IMR-90 (cell line): ENCODE measurements at regions of chr14 and their contacts with region 1.

Region 1: DNA sequence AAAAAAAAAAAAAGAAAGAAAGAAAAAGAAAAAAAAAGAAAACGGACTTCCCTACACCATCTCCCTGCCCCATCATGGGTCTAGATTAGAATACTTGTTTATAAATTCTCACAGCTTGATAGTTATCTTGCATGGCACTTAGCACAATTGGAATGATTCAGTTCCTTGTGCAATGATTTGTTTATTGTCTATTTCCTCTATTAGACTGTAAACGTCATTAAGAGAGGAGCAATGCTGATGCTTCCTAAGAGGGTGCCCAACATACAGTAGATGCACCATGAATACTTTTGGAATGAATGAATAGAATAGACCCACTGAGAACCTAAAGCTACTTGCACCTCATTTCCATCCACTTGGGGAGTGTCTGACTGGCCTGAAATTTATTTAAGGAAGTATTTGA is 40.8 kb downstream of the PAX9 start:
- DNase-seq: no peak
- ATAC-seq: no peak
- H3K4me3 ChIP-seq: no peak overlapping the region
- H3K27ac ChIP-seq: no peak overlapping the region
- H3K4me1 ChIP-seq: no peaks in the 10 kb centered on the region
- H3K27me3 ChIP-seq: no peaks in the 10 kb centered on the region
- CTCF ChIP-seq: no peak
- POLR2A ChIP-seq: no peak
- RAD21 ChIP-seq: no peak

Region 2: DNA sequence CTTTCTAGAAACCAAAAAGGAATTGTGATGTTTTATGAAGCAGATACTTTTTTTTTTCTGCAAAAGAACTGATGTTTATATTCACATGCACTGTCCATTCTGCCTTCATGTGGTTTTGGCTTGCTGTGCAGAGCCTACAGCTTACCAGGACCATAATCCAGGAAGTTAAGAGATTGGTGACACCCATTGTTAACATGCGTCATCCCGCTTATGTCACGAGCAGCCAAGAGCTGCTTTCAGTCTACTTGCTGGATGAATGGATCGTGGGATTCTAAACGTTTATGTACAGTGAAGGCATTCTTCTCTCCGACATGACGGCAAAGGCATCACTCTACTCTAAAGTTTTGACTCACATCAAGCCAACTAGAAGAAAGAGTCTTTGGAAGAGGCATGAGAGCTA is 35.8 kb after region 1 on chr14:
- CTCF ChIA-PET with region 1: interaction called, 10 read pairs
- POLR2A ChIA-PET with region 1: no interaction called
- dilution Hi-C with region 1: no loop called
- in situ Hi-C with region 1: no loop called
- intact Hi-C with region 1: no loop called
- DNase-seq: no peak
- ATAC-seq: no peak
- H3K4me3 ChIP-seq: no peak overlapping the region
- H3K27ac ChIP-seq: no peak overlapping the region
- H3K4me1 ChIP-seq: no peaks in the 10 kb centered on the region
- H3K27me3 ChIP-seq: no peaks in the 10 kb centered on the region
- CTCF ChIP-seq: no peak
- POLR2A ChIP-seq: no peak
- RAD21 ChIP-seq: no peak

Region 3: GRCh38 chr14:36975835-36976234 is 273.4 kb after region 1 on chr14:
- CTCF ChIA-PET with region 1: no interaction called
- POLR2A ChIA-PET with region 1: no interaction called
- dilution Hi-C with region 1: no loop called
- in situ Hi-C with region 1: no loop called
- intact Hi-C with region 1: no loop called
- DNase-seq: peak; percentile 25
- ATAC-seq: no peak
- H3K4me3 ChIP-seq: no peak overlapping the region
- H3K27ac ChIP-seq: no peak overlapping the region
- H3K4me1 ChIP-seq: peaks cover 12% of the 10 kb centered on the region
- H3K27me3 ChIP-seq: no peaks in the 10 kb centered on the region
- CTCF ChIP-seq: no peak
- POLR2A ChIP-seq: no peak
- RAD21 ChIP-seq: no peak